Activated CD4-positive, alpha-beta T cell treated with anti-CD3 and anti-CD28 coated beads for 36 hours (primary cell): ENCODE measurements at regions of chrX and their contacts with region 1.

Region 1: GRCh38 chrX:137550665-137551261 is 15.2 kb upstream of the ZIC3 start:
- DNase-seq: no peak
- ATAC-seq: no peak
- H3K4me3 Mint-ChIP-seq: peak overlapping the region; percentile 15
- H3K27ac Mint-ChIP-seq: no peak overlapping the region
- H3K4me1 Mint-ChIP-seq: peaks cover 8% of the 10 kb centered on the region
- H3K27me3 Mint-ChIP-seq: peaks cover 40% of the 10 kb centered on the region

Region 2: DNA sequence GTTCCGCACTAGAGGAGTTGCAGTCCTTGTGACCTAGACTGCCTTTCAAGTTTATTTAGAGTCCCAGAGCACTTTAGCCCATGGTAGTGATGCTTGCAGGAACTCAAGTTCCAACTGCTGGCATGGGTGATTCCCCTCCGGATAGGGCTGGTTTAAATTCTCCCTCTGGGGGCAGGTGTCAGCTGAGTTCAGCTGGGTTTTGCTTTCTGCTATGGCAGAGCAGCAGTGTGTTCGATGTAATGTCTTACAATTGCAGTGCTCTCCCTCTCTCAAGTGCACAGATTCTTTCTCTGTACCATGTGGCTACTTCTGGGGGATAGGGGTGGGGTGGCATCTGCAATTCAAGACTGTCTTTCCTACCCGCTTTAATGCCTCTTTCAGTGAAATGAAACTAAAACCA is 149.7 kb before region 1 on chrX:
- CTCF ChIA-PET with region 1: no interaction called
- POLR2A ChIA-PET with region 1: no interaction called
- intact Hi-C with region 1: no loop called
- DNase-seq: no peak
- ATAC-seq: no peak
- H3K4me3 Mint-ChIP-seq: no peak overlapping the region
- H3K27ac Mint-ChIP-seq: no peak overlapping the region
- H3K4me1 Mint-ChIP-seq: no peaks in the 10 kb centered on the region
- H3K27me3 Mint-ChIP-seq: peaks cover 6% of the 10 kb centered on the region

Region 3: DNA sequence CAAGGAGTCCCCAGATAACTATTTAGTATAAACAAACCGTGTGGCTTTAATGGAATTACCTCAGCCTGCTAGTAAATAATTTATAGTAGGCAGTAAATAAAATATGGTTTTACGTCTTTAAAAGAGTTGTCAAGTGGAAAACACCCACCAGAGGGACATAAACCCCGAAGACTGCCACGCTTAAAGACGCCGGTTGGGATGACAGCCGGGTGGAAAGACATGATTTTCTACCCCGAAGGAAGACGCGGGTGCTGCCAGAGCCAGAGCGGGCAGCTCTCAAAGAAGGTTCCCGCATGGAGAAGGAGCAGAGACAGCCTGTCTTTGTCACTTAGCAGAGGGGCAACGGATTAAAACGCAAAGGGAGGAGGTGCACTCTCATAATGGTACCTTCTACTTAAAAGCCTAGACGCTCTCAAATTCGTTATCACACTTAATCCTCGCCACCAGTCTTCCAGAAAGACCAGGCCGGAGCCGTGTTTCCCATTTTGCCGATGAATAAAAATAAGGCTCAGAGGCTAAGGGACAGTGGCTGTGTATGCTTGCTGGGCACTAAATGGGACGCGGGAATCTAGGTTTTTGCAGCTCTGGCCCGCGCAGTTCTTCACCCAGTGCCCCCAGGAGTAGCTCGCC is 125.4 kb before region 1 on chrX:
- CTCF ChIA-PET with region 1: no interaction called
- POLR2A ChIA-PET with region 1: no interaction called
- intact Hi-C with region 1: loop called (anchors 1 to 2 kb)
- DNase-seq: no peak
- ATAC-seq: no peak
- H3K4me3 Mint-ChIP-seq: no peak overlapping the region
- H3K27ac Mint-ChIP-seq: no peak overlapping the region
- H3K4me1 Mint-ChIP-seq: peaks cover 4% of the 10 kb centered on the region
- H3K27me3 Mint-ChIP-seq: peaks cover 54% of the 10 kb centered on the region

Region 4: GRCh38 chrX:137565921-137566745 is 15.4 kb after region 1 on chrX and contains the start of gene ZIC3:
- CTCF ChIA-PET with region 1: no interaction called
- POLR2A ChIA-PET with region 1: no interaction called
- intact Hi-C with region 1: loop called (anchors 1 to 2 kb)
- DNase-seq: peak; percentile 58
- ATAC-seq: peak; percentile 71
- H3K4me3 Mint-ChIP-seq: peak within 1 kb of the TSS; percentile 55
- H3K27ac Mint-ChIP-seq: no peak within 1 kb of the TSS
- H3K4me1 Mint-ChIP-seq: peaks cover 17% of the 10 kb centered on the region
- H3K27me3 Mint-ChIP-seq: peaks cover 45% of the 10 kb centered on the region
- total RNA-seq, gene ZIC3: not detected